ENCODE measurements at regions of chr2 and their contacts with region 1.

Region 1: DNA sequence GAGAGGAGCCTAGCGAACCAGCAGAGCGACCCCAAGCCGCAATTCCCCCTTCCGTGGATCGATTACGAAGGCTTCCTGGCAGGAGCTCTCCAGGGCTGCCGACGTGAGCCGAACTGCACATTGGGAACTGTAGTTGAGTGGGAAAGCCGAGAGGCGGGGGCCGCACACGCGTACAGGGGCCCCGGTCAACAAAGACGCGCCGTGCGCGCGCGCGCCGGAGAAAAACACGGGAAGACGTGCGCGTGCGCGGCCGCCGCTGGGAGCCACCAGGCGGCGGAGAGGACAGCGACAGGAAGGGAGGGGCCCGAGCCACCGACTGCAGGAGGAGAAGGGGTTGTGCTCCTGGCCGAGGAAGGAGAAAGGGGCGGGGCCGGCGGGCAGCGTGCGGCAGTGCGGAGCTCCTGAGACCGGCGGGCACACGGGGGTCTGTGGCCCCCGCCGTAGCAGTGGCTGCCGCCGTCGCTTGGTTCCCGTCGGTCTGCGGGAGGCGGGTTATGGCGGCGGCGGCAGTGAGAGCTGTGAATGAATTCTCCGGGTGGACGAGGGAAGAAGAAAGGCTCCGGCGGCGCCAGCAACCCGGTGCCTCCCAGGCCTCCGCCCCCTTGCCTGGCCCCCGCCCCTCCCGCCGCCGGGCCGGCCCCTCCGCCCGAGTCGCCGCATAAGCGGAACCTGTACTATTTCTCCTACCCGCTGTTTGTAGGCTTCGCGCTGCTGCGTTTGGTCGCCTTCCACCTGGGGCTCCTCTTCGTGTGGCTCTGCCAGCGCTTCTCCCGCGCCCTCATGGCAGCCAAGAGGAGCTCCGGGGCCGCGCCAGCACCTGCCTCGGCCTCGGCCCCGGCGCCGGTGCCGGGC is at the start of gene SPAST:
- DNase-seq: peak; percentile 94
- ATAC-seq: peak; percentile 93
- H3K4me3 ChIP-seq: peak within 1 kb of the TSS; percentile 66 to 85
- H3K27ac ChIP-seq: peak within 1 kb of the TSS; percentile 69
- H3K4me1 ChIP-seq: peaks cover 0 to 17% of the 10 kb centered on the region in 2 experiments; a peak in 2 of 4 replicates
- H3K27me3 ChIP-seq: no peaks in the 10 kb centered on the region
- CTCF ChIP-seq: peak in 1 of 3 experiments; percentile 45; a peak in 2 of 6 replicates
- POLR2A ChIP-seq: peak; percentile 12
- RAD21 ChIP-seq: peak; percentile 15; the same call in 1 of the 2 replicates
- total RNA-seq, gene SPAST: 16.2 TPM

Region 2: GRCh38 chr2:31568585-31569201 is 494.8 kb before region 1 on chr2:
- CTCF ChIA-PET with region 1: no interaction called
- POLR2A ChIA-PET with region 1: no interaction called
- RAD21 ChIA-PET with region 1: no interaction called
- intact Hi-C with region 1: no loop called
- DNase-seq: no peak
- ATAC-seq: no peak
- H3K4me3 ChIP-seq: no peak overlapping the region
- H3K27ac ChIP-seq: no peak overlapping the region
- H3K4me1 ChIP-seq: no peaks in the 10 kb centered on the region
- H3K27me3 ChIP-seq: peaks cover 8% of the 10 kb centered on the region; the same call in 1 of the 2 replicates
- CTCF ChIP-seq: no peak
- POLR2A ChIP-seq: no peak
- RAD21 ChIP-seq: no peak

Region 3: DNA sequence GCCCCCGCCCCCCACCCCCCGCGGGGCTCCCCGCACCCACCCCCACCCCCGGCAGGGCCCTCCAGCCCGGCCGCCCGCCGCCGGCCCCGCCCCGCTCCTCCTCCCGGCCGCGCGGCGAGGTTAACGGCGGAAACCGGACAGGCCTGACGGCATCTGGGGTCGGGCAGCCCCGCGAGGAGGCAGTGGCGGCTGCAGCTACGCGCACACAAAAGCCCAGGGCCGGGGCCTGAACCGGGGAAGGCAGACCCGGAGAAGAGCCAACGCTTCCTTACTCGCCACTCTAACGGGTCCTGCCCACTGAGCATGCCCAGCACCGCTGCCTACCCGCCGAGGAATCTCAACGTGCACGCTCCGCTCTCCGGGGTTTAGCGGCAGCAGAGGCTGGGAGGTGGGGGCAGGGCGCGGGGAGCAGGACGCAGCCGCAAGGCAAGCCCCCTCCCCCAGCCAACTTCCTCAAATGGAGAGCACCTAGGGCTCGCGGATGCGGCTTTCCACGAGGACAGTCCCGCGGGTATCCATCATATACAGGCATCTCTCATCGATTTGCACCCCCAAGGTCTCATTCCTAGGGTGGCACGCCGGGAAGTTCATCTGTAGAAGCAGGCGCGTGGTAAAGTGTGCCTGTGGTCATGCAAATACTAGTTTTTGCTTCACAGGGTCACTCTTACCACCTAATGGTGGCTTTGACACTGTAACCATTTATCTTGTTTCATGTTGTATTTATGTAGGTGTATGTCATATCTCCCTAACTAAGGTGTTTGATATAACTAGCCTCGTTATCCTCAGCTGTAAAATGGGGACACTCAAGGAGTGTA is 52.7 kb before region 1 on chr2 and contains the start of gene MEMO1:
- CTCF ChIA-PET with region 1: no interaction called
- POLR2A ChIA-PET with region 1: interaction called, 3 read pairs
- RAD21 ChIA-PET with region 1: no interaction called
- intact Hi-C with region 1: loop called (anchors 1 kb)
- DNase-seq: peak; percentile 83
- ATAC-seq: peak; percentile 76
- H3K4me3 ChIP-seq: peak within 1 kb of the TSS; percentile 81 to 93
- H3K27ac ChIP-seq: peak within 1 kb of the TSS; percentile 97
- H3K4me1 ChIP-seq: peaks cover 13 to 29% of the 10 kb centered on the region in 2 experiments; a peak in 3 of 4 replicates
- H3K27me3 ChIP-seq: no peaks in the 10 kb centered on the region
- CTCF ChIP-seq: no peak
- POLR2A ChIP-seq: peak; percentile 89
- RAD21 ChIP-seq: peak; percentile 32
- total RNA-seq, gene MEMO1: 44.7 TPM

Region 4: GRCh38 chr2:32039447-32040219 is 23.9 kb before region 1 on chr2 and contains the start of gene DPY30:
- CTCF ChIA-PET with region 1: interaction called, 5 read pairs
- POLR2A ChIA-PET with region 1: interaction called, 20 read pairs
- RAD21 ChIA-PET with region 1: interaction called in 1 of 2 experiments, 4 read pairs
- intact Hi-C with region 1: no loop called
- DNase-seq: peak; percentile 86
- ATAC-seq: peak; percentile 90
- H3K4me3 ChIP-seq: peak within 1 kb of the TSS; percentile 73 to 96
- H3K27ac ChIP-seq: peak within 1 kb of the TSS; percentile 66
- H3K4me1 ChIP-seq: peaks cover 5 to 18% of the 10 kb centered on the region in 2 experiments; a peak in 3 of 4 replicates
- H3K27me3 ChIP-seq: no peaks in the 10 kb centered on the region
- CTCF ChIP-seq: no peak
- POLR2A ChIP-seq: peak; percentile 99
- RAD21 ChIP-seq: peak; percentile 16; the same call in 1 of the 2 replicates
- total RNA-seq, gene DPY30: 79.5 TPM

Region 5: DNA sequence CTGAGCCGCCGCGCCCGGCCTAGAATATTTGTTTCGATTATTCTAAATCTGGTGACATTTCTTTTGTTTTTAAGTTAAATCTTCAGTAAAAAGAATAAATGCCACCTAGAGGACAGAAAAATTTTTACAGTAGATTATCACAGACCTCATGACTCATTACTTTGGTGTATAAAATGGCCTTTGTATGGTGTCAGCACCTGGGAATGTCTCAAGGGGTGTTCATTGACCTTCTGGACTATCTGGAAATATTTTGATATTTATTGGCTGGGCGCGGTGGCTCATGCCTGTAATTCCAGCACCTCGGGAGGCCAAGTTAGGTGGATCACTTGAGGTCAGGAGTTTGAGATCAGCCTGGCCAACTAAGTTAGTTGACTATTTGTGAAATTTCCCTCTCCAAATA is 71.9 kb after region 1 on chr2:
- CTCF ChIA-PET with region 1: interaction called, 5 read pairs
- POLR2A ChIA-PET with region 1: no interaction called
- RAD21 ChIA-PET with region 1: no interaction called
- intact Hi-C with region 1: loop called (anchors 1 kb)
- DNase-seq: peak; percentile 79
- ATAC-seq: peak; percentile 96
- H3K4me3 ChIP-seq: peak overlapping the region in 1 of 2 experiments; percentile 16; a peak in 2 of 4 replicates
- H3K27ac ChIP-seq: peak overlapping the region; percentile 49; the same call in 1 of the 2 replicates
- H3K4me1 ChIP-seq: peaks cover 3 to 23% of the 10 kb centered on the region in 2 experiments; a peak in 3 of 4 replicates
- H3K27me3 ChIP-seq: no peaks in the 10 kb centered on the region
- CTCF ChIP-seq: peak; percentile 20 to 47 (median 23); a peak in 4 of 6 replicates
- POLR2A ChIP-seq: no peak
- RAD21 ChIP-seq: peak; percentile 54

Region 6: DNA sequence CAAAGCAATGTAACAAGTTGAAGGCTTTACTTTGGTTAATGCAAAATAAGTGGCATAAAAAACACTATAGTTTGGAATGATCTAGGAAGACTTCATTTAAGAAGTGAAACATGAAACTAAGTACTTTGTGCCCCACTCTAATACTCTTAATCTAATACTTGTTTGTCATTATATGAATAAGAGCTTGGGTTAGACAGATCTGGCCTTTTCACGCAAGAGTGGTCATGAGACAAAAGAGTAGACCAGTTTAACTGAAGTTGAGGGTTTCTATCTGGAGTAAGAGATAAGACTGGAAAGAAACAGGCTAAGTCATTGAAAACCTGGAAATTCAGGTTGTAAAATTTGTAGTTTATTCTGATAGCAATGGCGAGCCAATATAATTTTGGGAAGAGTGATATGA is 105.0 kb after region 1 on chr2:
- CTCF ChIA-PET with region 1: no interaction called
- POLR2A ChIA-PET with region 1: interaction called, 5 read pairs
- RAD21 ChIA-PET with region 1: interaction called in 1 of 2 experiments, 3 read pairs
- intact Hi-C with region 1: loop called (anchors 2 kb)
- DNase-seq: no peak
- ATAC-seq: no peak
- H3K4me3 ChIP-seq: no peak overlapping the region
- H3K27ac ChIP-seq: no peak overlapping the region
- H3K4me1 ChIP-seq: peaks cover 4 to 11% of the 10 kb centered on the region in 2 experiments; a peak in 1 of 4 replicates
- H3K27me3 ChIP-seq: no peaks in the 10 kb centered on the region
- CTCF ChIP-seq: no peak
- POLR2A ChIP-seq: no peak
- RAD21 ChIP-seq: no peak

Region 7: DNA sequence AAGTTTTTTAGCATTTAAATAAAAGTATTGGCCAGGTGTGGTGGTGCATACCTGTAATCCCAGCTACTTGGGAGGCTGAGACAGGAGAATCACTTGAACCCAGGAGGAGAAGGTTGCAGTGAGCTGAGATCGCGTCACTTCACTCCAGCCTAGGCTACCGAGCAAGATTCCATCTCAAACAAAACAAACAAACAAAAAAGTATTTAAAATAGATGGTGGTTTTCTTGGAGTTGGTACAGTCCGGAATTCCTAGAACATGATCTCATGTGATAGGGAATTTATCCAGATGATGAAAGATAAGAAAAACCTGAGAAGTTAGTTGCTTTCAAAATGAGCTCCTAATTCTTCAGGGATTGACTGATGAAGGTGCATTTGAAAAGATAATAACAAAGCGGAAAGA is 355.2 kb after region 1 on chr2:
- CTCF ChIA-PET with region 1: no interaction called
- POLR2A ChIA-PET with region 1: no interaction called
- RAD21 ChIA-PET with region 1: no interaction called
- intact Hi-C with region 1: no loop called
- DNase-seq: no peak
- ATAC-seq: no peak
- H3K4me3 ChIP-seq: no peak overlapping the region
- H3K27ac ChIP-seq: no peak overlapping the region
- H3K4me1 ChIP-seq: peaks cover 0 to 10% of the 10 kb centered on the region in 2 experiments; a peak in 2 of 4 replicates
- H3K27me3 ChIP-seq: no peaks in the 10 kb centered on the region
- CTCF ChIP-seq: no peak
- POLR2A ChIP-seq: no peak
- RAD21 ChIP-seq: no peak

Region 8: DNA sequence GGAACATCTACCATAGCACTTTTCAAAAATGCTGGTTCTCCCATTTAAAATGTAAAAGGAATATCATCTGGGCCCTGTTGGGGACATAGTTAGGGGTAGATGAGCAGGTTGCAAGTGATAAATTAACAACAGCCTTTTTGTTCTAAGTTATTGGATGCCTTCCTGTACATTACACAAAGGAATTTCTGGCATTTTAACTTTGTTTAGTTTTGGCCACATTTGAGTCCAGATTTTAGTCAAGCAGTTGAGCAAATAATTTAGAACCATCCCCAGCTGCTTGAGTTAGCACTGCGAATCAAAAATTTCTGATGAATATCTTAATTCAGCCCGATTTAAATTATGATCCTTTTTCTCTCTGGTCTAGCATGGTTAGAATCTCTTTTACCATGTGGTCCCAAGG is 688.7 kb after region 1 on chr2:
- CTCF ChIA-PET with region 1: no interaction called
- POLR2A ChIA-PET with region 1: no interaction called
- RAD21 ChIA-PET with region 1: no interaction called
- intact Hi-C with region 1: no loop called
- DNase-seq: no peak
- ATAC-seq: no peak
- H3K4me3 ChIP-seq: no peak overlapping the region
- H3K27ac ChIP-seq: no peak overlapping the region
- H3K4me1 ChIP-seq: no peaks in the 10 kb centered on the region
- H3K27me3 ChIP-seq: no peaks in the 10 kb centered on the region
- CTCF ChIP-seq: no peak
- POLR2A ChIP-seq: no peak
- RAD21 ChIP-seq: no peak